Activated CD8-positive, alpha-beta T cell treated with anti-CD3 and anti-CD28 coated beads for 36 hours (primary cell): ENCODE measurements at regions of chr4 and their contacts with region 1.

Region 1: DNA sequence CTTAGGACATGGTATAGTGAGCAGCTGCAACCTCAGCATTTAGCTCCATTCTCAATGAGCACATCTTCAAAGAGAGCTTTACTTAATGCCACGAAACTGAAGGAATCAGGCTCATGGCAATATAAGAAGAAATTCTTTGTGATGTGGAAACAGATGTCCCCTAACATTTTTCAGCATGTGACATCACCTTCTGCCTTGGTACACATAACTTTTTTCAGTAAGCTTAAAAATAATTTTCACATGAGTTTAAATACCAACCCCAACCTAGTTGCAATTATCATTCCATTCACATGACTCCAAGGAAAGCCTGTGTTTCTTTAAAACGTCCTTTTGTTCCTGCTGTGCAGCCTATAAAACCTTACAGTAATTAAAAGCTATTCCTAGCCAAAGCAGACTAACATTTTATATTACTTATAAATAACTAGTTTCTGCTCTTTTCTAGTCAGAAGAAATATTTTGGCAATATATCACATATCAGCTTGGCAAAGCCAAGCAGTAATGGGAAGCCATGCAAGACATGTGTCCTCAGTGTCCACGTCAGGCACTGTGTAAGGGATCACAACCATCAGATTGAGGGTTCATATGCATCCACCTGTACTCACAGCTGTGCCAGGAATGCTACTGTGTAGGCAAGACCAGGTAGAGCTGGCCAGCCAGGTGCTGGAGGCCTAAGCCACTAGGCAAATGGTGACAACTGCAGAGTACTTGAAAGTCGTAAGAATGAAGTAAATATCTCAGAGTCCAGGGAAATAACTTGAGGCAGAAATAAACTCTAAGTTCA is 466.6 kb downstream of the INPP4B start:
- DNase-seq: no peak
- ATAC-seq: no peak
- H3K4me3 Mint-ChIP-seq: no peak overlapping the region
- H3K27ac Mint-ChIP-seq: peak overlapping the region; percentile 94
- H3K4me1 Mint-ChIP-seq: peaks cover 73% of the 10 kb centered on the region
- H3K27me3 Mint-ChIP-seq: no peaks in the 10 kb centered on the region
- CTCF ChIP-seq: no peak

Region 2: DNA sequence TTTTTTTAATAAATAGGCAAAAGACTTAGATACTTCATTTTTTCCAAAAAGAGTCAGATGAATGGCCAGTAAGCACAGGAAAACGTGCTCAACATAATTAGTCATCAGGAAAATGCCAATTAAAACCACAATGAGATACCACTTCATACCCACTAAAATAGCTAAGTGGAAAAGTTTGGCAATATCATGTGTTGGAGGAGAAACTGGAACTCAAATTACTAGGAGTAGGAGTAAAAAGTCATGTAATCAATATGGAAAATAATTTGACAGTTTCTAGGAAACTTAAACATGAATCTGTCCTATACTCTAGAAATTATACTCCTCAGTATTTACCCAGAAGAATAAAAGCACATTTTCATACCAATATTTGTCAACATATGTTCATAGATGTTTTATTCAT is 16.8 kb after region 1 on chr4:
- CTCF ChIA-PET with region 1: interaction called, 7 read pairs
- POLR2A ChIA-PET with region 1: interaction called, 16 read pairs
- intact Hi-C with region 1: no loop called
- DNase-seq: no peak
- ATAC-seq: peak; percentile 46
- H3K4me3 Mint-ChIP-seq: peak overlapping the region; percentile 57
- H3K27ac Mint-ChIP-seq: peak overlapping the region; percentile 92
- H3K4me1 Mint-ChIP-seq: peaks cover 81% of the 10 kb centered on the region
- H3K27me3 Mint-ChIP-seq: no peaks in the 10 kb centered on the region
- CTCF ChIP-seq: no peak